Mammary epithelial cell (primary cell): ENCODE measurements at regions of chr3 and their contacts with region 1.

Region 1: GRCh38 chr3:182618085-182618732 is 175.1 kb upstream of the ATP11B start:
- DNase-seq: peak; percentile 57
- H3K4me3 ChIP-seq: no peak overlapping the region
- H3K27ac ChIP-seq: peak overlapping the region; percentile 81
- H3K4me1 ChIP-seq: peaks cover 18% of the 10 kb centered on the region
- H3K27me3 ChIP-seq: no peaks in the 10 kb centered on the region
- CTCF ChIP-seq: peak; percentile 70 to 74

Region 2: DNA sequence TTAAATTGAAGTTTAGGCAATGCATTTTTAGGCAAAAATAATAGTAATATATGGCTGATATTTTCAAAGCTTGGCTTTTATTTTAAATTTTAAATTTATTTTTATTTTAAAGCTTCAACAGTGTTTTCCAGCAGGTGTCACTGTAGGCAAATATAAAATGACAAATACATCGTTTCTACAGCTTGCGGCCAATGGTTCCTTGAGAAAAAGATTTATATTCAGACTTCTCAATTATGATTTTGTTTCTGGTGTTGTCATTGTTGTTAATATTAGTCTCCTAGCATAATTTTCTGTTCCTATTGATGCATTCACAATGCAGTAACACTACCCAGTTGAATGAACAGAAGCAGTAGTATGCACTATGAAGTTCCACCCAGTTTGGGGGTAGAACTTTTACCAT is 1407.9 kb before region 1 on chr3:
- CTCF ChIA-PET with region 1: no interaction called
- dilution Hi-C with region 1: no loop called
- in situ Hi-C with region 1: no loop called
- intact Hi-C with region 1: loop called (anchors 5 kb)
- DNase-seq: peak; percentile 2
- H3K4me3 ChIP-seq: no peak overlapping the region
- H3K27ac ChIP-seq: no peak overlapping the region
- H3K4me1 ChIP-seq: no peaks in the 10 kb centered on the region
- H3K27me3 ChIP-seq: peaks cover 6% of the 10 kb centered on the region
- CTCF ChIP-seq: peak in 1 of 2 donors; percentile 35

Region 3: GRCh38 chr3:181709537-181710279 is 908.5 kb before region 1 on chr3:
- CTCF ChIA-PET with region 1: no interaction called
- dilution Hi-C with region 1: no loop called
- in situ Hi-C with region 1: loop called (anchors 10 kb)
- intact Hi-C with region 1: loop called (anchors 1 kb)
- DNase-seq: peak; percentile 40
- H3K4me3 ChIP-seq: peak overlapping the region in 2 of 3 experiments; percentile 26 to 33
- H3K27ac ChIP-seq: no peak overlapping the region
- H3K4me1 ChIP-seq: peaks cover 15% of the 10 kb centered on the region
- H3K27me3 ChIP-seq: peaks cover 58% of the 10 kb centered on the region
- CTCF ChIP-seq: peak; percentile 53 to 66

Region 4: GRCh38 chr3:182258538-182259177 is 359.6 kb before region 1 on chr3:
- CTCF ChIA-PET with region 1: no interaction called
- dilution Hi-C with region 1: no loop called
- in situ Hi-C with region 1: no loop called
- intact Hi-C with region 1: loop called (anchors 1 kb)
- DNase-seq: peak; percentile 31
- H3K4me3 ChIP-seq: no peak overlapping the region
- H3K27ac ChIP-seq: no peak overlapping the region
- H3K4me1 ChIP-seq: peaks cover 3% of the 10 kb centered on the region
- H3K27me3 ChIP-seq: no peaks in the 10 kb centered on the region
- CTCF ChIP-seq: peak; percentile 59 to 83

Region 5: GRCh38 chr3:182389071-182389815 is 229.0 kb before region 1 on chr3:
- CTCF ChIA-PET with region 1: no interaction called
- dilution Hi-C with region 1: no loop called
- in situ Hi-C with region 1: no loop called
- intact Hi-C with region 1: loop called (anchors 5 kb)
- DNase-seq: peak; percentile 98
- H3K4me3 ChIP-seq: peak overlapping the region in 1 of 3 experiments; percentile 4
- H3K27ac ChIP-seq: peak overlapping the region; percentile 87
- H3K4me1 ChIP-seq: peaks cover 22% of the 10 kb centered on the region
- H3K27me3 ChIP-seq: no peaks in the 10 kb centered on the region
- CTCF ChIP-seq: no peak

Region 6: GRCh38 chr3:182713743-182714517 is 95.7 kb after region 1 on chr3:
- CTCF ChIA-PET with region 1: no interaction called
- dilution Hi-C with region 1: no loop called
- in situ Hi-C with region 1: no loop called
- intact Hi-C with region 1: loop called (anchors 1 kb)
- DNase-seq: peak; percentile 51
- H3K4me3 ChIP-seq: no peak overlapping the region
- H3K27ac ChIP-seq: no peak overlapping the region
- H3K4me1 ChIP-seq: no peaks in the 10 kb centered on the region
- H3K27me3 ChIP-seq: no peaks in the 10 kb centered on the region
- CTCF ChIP-seq: peak; percentile 65 to 73